ENCODE measurements at regions of chr19 and their contacts with region 1.

Region 1: DNA sequence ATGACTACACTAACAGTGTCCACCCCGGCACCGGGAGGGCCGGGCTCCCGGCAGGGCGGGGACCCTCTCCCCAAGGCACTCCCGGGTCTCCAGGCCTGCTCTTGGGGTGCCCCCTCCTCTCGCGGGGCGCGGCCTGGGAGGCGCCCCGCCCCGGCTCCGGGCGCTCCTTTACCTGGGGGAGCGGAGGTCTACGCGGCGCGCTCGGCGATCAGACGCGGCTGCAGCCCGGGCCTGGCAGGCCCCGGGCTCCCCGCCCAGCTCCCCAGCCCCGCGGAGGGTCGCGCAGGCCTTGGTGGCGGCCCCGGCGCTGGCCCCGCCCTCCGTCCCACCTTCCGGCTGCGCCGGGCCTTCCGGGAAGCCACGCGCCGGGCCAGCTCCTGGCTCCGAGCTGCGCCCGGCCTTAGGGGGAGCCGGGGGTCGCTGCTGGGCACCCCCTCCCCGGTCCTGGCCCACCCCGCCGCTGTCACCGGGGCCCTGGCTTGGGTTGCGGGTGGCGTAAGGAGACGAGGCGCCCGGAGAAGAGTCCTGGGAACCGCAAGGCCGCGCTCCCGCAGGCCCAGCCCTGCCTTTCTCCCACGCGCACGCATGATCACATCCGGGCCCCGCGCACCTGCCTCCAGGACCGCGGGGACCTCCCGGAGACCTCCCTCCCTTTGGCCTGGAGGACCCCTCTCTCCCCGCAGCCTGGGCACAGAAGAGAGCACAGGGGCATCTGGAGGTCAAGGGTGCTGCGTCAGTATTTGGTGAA is at the start of gene C19orf12:
- DNase-seq: peak; percentile 84
- ATAC-seq: peak; percentile 85
- total RNA-seq, gene C19orf12: 57.0 TPM

Region 2: DNA sequence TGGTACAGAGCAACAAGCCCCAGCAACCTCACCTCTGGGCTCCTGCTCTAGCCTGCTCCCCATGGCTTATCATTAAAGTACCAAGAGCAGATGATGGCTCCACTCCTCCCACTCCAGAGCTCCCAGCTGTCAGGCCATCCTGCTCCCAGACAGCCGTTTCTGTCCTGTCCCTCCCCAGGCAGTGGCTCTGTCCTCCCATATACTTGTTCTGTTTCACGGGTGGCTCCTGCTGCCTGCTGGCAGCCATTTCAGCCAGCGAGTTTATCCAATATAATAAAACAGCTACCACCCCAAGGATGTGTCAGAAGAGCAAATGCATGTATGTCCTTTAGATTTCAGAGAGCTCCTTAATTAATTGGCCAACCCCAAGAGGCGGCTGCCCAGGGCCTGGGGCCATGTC is 268.8 kb before region 1 on chr19:
- intact Hi-C with region 1: no loop called
- DNase-seq: no peak
- ATAC-seq: no peak

Region 3: GRCh38 chr19:29610563-29611271 is 104.4 kb before region 1 on chr19:
- intact Hi-C with region 1: loop called (anchors 5 kb)
- DNase-seq: peak; percentile 84
- ATAC-seq: peak; percentile 80

Region 4: GRCh38 chr19:29694669-29695627 is 20.2 kb before region 1 on chr19:
- intact Hi-C with region 1: loop called (anchors 2 kb)
- DNase-seq: peak; percentile 91
- ATAC-seq: peak; percentile 98

Region 5: DNA sequence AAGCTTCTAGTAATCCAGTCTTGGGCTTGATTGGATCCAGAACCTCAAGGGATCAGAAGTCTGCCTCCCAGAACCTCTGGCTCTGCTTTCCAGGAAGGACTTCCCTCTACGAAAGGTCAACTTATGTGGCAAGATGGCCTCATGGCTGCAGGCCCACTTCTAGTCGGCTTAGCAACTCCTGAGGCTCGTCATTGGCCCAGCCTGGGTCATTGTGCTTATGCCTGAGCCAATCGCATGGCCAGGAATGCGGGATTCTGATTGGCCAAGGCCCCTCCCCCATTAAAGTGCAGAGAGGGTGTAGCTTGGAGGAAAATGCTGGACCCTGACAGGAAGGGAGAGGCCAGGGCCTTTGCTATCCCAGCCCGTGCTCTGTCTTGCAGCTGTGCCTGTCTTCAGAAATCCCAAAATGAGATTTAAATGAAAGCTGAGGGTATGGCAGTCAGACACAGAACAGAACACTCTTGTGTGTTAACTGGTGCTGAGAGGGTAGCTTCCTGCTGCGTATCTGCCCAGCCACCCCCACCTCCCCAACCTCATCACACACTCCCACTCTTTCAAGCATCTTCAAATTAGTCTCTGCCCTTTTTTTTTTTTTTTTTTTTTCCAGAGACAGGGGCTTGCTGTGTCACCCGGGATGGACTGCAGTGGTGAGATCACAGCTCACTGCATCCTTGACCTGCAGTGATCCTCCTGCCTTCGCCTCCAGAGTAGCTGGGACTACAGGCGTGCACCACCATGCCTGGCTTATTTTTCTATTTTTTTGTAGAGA is 91.2 kb after region 1 on chr19:
- intact Hi-C with region 1: no loop called
- DNase-seq: peak; percentile 73
- ATAC-seq: peak; percentile 68

Measured in left ventricle myocardium superior (tissue), 1 donor.